ENCODE measurements at regions of chr2 and their contacts with region 1.

Region 1: DNA sequence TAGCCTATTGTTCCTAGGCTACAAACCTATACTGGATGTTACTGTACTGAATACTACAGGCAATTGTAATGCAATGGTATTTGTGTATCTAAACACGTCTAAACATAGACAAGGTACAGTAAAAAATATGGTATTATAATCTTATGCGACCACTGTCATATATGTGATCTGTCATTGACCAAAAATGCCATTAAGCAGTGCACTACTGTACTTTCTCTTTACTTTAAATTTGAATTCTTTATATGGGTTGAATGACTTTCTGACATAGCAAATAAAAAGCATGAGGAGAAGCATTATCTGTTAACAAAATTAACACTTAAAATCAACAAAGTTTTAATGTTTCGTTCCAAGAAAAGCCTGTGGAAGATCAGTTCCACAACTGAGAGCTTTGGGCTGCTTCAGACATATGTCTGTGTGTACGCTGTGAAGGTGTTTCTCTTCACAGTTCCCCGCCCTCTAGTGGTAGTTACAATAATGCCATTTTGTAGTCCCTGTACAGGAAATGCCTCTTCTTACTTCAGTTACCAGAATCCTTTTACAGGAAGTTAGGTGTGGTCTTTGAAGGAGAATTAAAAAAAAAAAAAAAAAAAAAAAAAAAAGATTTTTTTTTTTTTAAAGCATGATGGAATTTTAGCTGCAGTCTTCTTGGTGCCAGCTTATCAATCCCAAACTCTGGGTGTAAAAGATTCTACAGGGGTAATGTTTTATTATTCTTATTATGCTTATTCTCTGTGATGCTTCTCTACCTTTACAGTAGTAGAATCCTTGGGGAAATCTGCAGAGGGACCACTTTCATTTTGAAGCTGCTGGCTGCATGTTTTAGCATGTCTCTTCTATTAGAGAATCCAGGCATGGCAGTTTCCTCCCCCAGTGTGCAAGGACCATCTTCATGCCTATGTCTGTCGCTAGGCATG is 54.5 kb downstream of the SCN2A start:
- DNase-seq: no peak
- ATAC-seq: peak; percentile 78 to 99 (median 96)
- H3K4me3 ChIP-seq: no peak overlapping the region
- H3K27ac ChIP-seq: no peak overlapping the region
- H3K4me1 ChIP-seq: no peaks in the 10 kb centered on the region
- H3K27me3 ChIP-seq: no peaks in the 10 kb centered on the region
- CTCF ChIP-seq: peak; percentile 72

Region 2: GRCh38 chr2:164992818-164993217 is 300.9 kb before region 1 on chr2:
- intact Hi-C with region 1: loop called (anchors 5 to 10 kb)
- DNase-seq: no peak
- ATAC-seq: peak in 2 of 4 donors; percentile 53 to 79
- H3K4me3 ChIP-seq: no peak overlapping the region
- H3K27ac ChIP-seq: no peak overlapping the region
- H3K4me1 ChIP-seq: no peaks in the 10 kb centered on the region
- H3K27me3 ChIP-seq: no peaks in the 10 kb centered on the region
- CTCF ChIP-seq: peak; percentile 64

Region 3: DNA sequence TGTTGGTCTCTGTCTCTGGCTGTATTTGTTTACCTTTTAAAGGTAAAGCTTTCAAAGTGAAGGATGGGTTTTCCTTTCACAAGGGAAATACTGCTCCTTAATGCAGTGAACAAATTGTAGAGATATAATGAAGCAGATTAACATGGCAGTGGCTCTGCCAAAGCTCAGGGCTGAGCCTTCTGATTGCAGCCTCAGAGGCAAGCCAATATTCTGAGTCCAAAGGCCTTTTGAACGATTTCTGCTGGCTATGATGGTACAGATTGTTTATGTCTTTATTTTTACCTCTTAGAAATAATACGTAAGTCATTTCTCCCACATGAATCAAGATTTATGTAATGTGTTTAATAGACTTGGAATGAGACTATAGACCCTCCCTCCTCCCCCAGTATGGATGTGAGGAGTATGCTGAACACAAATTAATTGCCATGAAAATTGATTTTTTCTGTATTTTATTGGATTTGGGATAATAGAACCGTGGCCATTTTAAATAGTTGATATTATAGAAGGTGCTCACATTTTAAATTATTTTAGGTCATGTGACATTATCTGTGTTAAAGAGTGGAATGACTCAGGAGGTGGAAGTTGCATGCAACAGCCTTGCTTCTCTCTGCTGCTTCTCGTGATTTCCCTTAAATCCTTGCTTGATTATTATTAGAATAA is 53.7 kb before region 1 on chr2:
- intact Hi-C with region 1: loop called (anchors 2 kb)
- DNase-seq: no peak
- ATAC-seq: no peak
- H3K4me3 ChIP-seq: no peak overlapping the region
- H3K27ac ChIP-seq: no peak overlapping the region
- H3K4me1 ChIP-seq: no peaks in the 10 kb centered on the region
- H3K27me3 ChIP-seq: no peaks in the 10 kb centered on the region
- CTCF ChIP-seq: no peak

Region 4: GRCh38 chr2:165357758-165358157 is 64.1 kb after region 1 on chr2:
- intact Hi-C with region 1: no loop called
- DNase-seq: no peak
- ATAC-seq: peak in 1 of 4 donors; percentile 62
- H3K4me3 ChIP-seq: no peak overlapping the region
- H3K27ac ChIP-seq: no peak overlapping the region
- H3K4me1 ChIP-seq: no peaks in the 10 kb centered on the region
- H3K27me3 ChIP-seq: no peaks in the 10 kb centered on the region
- CTCF ChIP-seq: no peak